ENCODE measurements at regions of chr3 and their contacts with region 1.

Region 1: GRCh38 chr3:59575113-59576001 is 525.5 kb upstream of the CFAP20DC start:
- DNase-seq: peak; percentile 89

Region 2: DNA sequence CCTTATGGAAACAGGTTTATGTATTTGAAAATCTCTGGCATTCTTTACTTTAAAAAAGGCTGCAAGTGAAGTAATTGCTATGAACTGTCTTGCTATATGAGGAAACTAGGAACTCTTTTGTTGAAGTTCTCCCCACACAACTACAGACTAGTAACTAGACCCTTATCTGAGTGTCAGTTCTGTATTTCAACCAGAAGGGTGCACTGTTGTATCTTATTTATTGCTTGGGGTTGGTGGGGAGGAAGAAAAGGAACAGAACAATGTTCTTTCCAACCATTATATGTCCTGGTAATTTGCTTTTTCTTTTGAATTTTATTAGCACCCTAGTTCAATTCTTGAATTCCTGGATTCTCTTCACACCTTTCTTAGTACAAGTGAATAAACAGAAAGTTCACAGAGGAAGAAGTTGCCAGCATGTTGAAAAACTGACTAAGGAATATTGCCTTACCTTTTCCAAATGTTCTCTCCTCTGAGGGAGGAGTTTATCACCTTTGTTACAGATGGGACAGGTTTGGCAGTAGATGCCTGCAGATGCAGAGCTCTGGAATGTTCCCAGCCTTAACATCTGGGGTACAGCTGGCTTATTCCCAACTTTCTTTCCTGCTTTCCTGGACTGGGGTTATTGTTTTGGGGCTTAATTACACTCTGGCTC is 363.1 kb before region 1 on chr3:
- intact Hi-C with region 1: loop called (anchors 10 kb)
- DNase-seq: no peak

Region 3: GRCh38 chr3:59313365-59313764 is 262.0 kb before region 1 on chr3:
- intact Hi-C with region 1: loop called (anchors 10 kb)
- DNase-seq: no peak

Region 4: GRCh38 chr3:59809710-59810444 is 234.5 kb after region 1 on chr3:
- intact Hi-C with region 1: loop called (anchors 5 kb)
- DNase-seq: no peak

Region 5: DNA sequence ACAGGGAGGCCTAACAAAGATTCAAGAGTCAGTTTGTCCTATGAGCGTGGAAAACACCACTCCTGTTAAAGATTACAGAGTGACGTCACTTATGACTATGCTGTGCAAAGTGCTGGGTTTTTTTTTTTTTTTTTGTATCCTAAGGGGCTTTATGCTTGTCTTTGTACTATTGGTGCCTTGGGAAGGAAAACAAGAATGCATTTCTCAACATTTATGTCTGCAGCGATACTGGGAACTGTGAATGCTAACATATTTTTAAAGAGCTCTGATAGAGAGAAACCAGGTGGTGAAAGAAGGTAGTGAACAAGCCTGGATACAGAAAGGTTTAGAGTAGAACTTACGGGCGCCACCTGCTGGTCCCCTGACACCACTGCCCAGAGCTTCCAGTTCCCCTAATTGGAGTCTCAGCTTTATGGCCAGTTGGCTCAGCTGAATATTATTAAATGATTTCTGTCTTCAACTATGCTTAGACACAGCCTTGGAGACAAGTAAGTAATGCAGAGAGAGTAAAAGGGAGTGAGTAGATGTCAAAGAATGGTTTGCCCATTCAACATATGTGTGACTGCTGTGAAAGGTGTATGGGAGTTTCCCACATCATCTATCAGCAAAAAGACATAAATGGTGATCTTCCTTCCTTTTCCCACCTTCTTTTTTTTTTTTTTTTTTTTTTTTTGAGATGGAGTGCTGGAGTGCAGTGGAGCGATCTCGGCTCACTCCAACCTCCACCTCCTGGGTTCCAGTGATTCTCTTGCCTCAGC is 282.4 kb after region 1 on chr3:
- intact Hi-C with region 1: loop called (anchors 2 kb)
- DNase-seq: peak; percentile 80

Region 6: DNA sequence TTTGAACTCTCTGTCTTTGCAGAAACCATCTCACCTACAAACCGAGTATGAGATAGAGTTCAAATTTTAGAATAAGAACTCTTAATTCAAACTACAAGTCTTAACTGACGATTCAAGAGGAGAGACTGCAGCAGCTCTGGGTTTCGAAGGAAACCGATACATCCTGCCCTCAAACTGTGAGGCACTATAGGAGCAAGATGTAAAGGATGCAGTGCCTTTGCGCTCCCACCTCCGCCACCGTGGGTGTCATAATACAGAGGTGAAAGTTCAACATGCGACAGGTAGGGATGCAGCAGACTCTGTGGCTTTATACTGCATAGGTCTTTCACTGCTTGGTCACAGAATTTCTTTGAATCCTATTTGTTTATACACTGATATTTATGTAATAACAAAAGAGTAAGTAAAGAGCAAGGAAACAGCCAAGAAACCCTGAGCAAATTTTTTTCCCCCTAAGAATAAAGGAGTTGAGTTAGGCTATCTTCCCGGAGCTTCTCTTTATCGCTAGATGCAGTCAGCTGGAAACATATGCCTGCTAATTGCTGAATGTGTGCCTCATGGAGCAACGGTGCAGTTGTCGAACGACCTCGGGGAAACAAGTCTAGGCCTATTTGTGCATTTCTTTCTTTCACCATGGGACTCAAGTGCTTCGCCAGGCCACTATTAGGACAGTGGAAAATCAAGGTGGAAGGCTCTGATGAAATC is 572.0 kb after region 1 on chr3:
- intact Hi-C with region 1: no loop called
- DNase-seq: no peak

Measured in cardiac septum (tissue), 1 donor.